Caco-2 (cell line): ENCODE measurements at regions of chr10 and their contacts with region 1.

Region 1: GRCh38 chr10:117496616-117497028 is 45.9 kb upstream of the EMX2 start:
- DNase-seq: peak; percentile 91
- H3K4me3 ChIP-seq: no peak overlapping the region
- H3K4me3 Mint-ChIP-seq: peak overlapping the region; percentile 59
- H3K27ac Mint-ChIP-seq: peak overlapping the region; percentile 69
- H3K4me1 ChIP-seq: peaks cover 17% of the 10 kb centered on the region
- H3K4me1 Mint-ChIP-seq: peaks cover 11% of the 10 kb centered on the region
- H3K27me3 ChIP-seq: no peaks in the 10 kb centered on the region
- H3K27me3 Mint-ChIP-seq: no peaks in the 10 kb centered on the region
- CTCF ChIP-seq: peak; percentile 93 to 94

Region 2: GRCh38 chr10:117431160-117431559 is 65.5 kb before region 1 on chr10:
- CTCF ChIA-PET with region 1: interaction called, 16 read pairs
- POLR2A ChIA-PET with region 1: no interaction called
- intact Hi-C with region 1: no loop called
- DNase-seq: peak in 1 of 2 experiments; percentile 40
- H3K4me3 ChIP-seq: no peak overlapping the region
- H3K4me3 Mint-ChIP-seq: no peak overlapping the region
- H3K27ac Mint-ChIP-seq: no peak overlapping the region
- H3K4me1 ChIP-seq: peaks cover 23% of the 10 kb centered on the region
- H3K4me1 Mint-ChIP-seq: peaks cover 5% of the 10 kb centered on the region
- H3K27me3 ChIP-seq: no peaks in the 10 kb centered on the region
- H3K27me3 Mint-ChIP-seq: no peaks in the 10 kb centered on the region
- CTCF ChIP-seq: peak; percentile 49 to 58

Region 3: DNA sequence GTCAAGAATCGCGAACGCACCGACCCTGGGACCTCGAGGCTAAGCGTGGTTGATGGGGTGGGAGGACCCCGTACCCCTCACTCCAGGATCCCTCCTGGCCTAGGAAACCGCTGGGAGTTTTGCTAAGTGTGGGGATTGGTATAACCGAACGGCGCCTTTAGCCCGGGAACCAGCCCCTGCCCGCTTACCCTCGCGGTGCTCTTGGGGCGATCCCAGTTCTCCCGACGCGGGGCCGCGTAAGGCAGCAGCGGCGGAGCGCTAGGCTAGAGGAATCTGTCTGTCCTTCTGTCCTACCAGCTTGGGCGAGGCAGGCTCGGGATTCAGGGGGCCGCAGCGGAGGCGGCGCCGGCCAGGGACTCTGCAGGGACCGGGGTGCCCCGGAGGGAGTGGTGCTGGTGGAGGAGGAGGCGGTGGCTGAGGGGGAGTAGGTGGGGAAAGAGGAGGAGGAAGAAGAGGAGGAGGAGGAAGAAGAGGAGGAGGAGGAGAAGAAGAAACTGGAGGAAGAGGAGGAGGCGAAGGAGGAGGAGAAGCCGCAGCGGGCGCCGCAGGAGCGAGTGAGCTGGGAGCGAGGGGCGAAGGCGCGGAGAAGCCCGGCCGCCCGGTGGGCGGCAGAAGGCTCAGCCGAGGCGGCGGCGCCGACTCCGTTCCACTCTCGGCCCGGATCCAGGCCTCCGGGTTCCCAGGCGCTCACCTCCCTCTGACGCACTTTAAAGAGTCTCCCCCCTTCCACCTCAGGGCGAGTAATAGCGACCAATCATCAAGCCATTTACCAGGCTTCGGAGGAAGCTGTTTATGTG is 45.5 kb after region 1 on chr10:
- CTCF ChIA-PET with region 1: interaction called, 24 read pairs
- POLR2A ChIA-PET with region 1: no interaction called
- intact Hi-C with region 1: loop called (anchors 1 kb)
- DNase-seq: peak; percentile 88 to 90
- H3K4me3 ChIP-seq: peak overlapping the region; percentile 90
- H3K4me3 Mint-ChIP-seq: peak overlapping the region; percentile 93
- H3K27ac Mint-ChIP-seq: peak overlapping the region; percentile 65
- H3K4me1 ChIP-seq: peaks cover 9% of the 10 kb centered on the region
- H3K4me1 Mint-ChIP-seq: peaks cover 14% of the 10 kb centered on the region
- H3K27me3 ChIP-seq: no peaks in the 10 kb centered on the region
- H3K27me3 Mint-ChIP-seq: no peaks in the 10 kb centered on the region
- CTCF ChIP-seq: no peak

Region 4: DNA sequence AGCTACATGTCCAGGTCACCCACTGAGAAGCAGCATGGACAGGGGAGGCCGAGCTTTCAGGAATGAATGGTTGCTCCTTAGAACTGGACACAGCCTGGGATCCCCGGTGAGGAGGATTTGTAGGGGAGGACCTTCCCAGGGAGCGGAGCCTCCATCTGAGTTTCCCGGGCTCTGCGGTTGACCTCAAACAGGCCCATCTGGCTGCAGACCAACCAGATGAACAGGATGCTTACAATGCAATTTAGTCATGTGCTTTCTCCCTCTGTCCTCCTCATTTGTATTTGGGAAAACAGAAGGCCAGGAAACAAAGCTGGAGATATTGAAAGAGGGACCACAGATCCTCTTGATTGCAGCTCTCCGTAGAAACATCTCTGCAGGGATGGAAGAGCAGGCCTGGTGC is 150.7 kb after region 1 on chr10:
- CTCF ChIA-PET with region 1: no interaction called
- POLR2A ChIA-PET with region 1: no interaction called
- intact Hi-C with region 1: no loop called
- DNase-seq: no peak
- H3K4me3 ChIP-seq: no peak overlapping the region
- H3K4me3 Mint-ChIP-seq: no peak overlapping the region
- H3K27ac Mint-ChIP-seq: no peak overlapping the region
- H3K4me1 ChIP-seq: no peaks in the 10 kb centered on the region
- H3K4me1 Mint-ChIP-seq: no peaks in the 10 kb centered on the region
- H3K27me3 ChIP-seq: no peaks in the 10 kb centered on the region
- H3K27me3 Mint-ChIP-seq: peaks cover 4% of the 10 kb centered on the region
- CTCF ChIP-seq: no peak

Region 5: DNA sequence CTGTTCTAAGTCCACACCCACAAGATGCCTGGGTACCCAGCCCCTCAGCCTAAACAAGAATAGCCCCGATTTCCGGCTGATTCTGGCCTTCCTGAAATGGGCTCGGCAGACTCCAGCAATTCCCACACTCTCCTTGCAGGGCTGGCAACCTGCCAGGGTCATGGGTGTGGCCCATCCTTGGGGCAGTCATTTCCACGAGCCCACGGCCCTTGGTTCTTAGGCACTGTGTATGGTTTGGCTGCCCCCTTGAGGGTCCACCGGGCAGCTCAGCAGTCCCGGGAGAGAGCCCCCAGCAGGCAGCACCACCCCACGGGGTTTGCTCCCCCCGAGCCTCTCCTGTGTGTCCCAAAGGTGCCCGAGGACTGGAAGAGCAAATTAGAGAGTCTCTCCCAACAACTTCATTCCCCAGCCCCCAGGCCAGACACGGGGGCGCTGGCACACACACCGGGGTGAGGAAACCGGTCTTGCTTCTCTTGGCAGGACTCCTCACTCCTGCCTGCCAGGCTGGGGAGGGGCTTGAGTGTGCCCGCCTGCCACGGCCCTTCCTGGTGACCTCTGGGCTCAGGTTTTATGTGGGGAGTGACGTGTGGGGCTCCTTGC is 188.2 kb after region 1 on chr10:
- CTCF ChIA-PET with region 1: interaction called, 3 read pairs
- POLR2A ChIA-PET with region 1: no interaction called
- intact Hi-C with region 1: loop called (anchors 2 kb)
- DNase-seq: peak in 1 of 2 experiments; percentile 16
- H3K4me3 ChIP-seq: no peak overlapping the region
- H3K4me3 Mint-ChIP-seq: no peak overlapping the region
- H3K27ac Mint-ChIP-seq: no peak overlapping the region
- H3K4me1 ChIP-seq: no peaks in the 10 kb centered on the region
- H3K4me1 Mint-ChIP-seq: no peaks in the 10 kb centered on the region
- H3K27me3 ChIP-seq: no peaks in the 10 kb centered on the region
- H3K27me3 Mint-ChIP-seq: no peaks in the 10 kb centered on the region
- CTCF ChIP-seq: peak; percentile 20 to 35

Region 6: GRCh38 chr10:118106426-118106825 is 609.8 kb after region 1 on chr10:
- CTCF ChIA-PET with region 1: interaction called, 7 read pairs
- POLR2A ChIA-PET with region 1: interaction called, 10 read pairs
- intact Hi-C with region 1: loop called (anchors 1 kb)
- DNase-seq: peak; percentile 32 to 60
- H3K4me3 ChIP-seq: no peak overlapping the region
- H3K4me3 Mint-ChIP-seq: no peak overlapping the region
- H3K27ac Mint-ChIP-seq: no peak overlapping the region
- H3K4me1 ChIP-seq: no peaks in the 10 kb centered on the region
- H3K4me1 Mint-ChIP-seq: no peaks in the 10 kb centered on the region
- H3K27me3 ChIP-seq: no peaks in the 10 kb centered on the region
- H3K27me3 Mint-ChIP-seq: no peaks in the 10 kb centered on the region
- CTCF ChIP-seq: peak; percentile 56 to 65

Region 7: DNA sequence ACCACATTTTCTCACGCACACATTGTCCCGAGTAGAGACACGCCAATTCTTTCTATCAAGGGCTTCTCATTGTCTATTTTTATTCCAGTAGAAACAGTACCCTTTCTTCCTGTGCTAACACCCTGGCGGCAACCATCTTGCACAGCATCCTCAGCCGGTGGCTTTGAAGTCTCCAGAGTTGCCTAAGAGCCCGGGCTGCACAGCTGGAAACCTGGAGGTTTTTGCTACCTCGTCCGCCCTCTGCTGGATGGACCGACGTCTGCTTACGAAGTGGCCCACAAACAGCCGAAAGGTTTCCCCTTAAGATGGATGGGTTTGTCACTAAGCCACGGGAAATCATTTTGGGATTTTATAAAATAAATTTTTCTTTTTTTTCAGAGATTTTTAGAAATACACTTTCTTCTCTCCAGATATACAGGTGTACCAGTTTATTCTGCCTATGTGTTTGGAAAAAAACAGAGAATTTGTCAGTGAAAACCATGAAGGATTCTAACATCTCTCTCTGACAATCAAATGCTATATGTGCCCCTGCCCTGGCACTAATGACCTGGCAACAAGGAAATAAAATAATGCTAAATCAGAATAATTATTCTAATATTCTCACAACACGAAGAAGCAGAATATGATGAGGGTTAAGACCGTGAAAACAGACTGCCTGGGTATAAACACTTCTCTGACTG is 927.3 kb after region 1 on chr10:
- CTCF ChIA-PET with region 1: interaction called, 3 read pairs
- POLR2A ChIA-PET with region 1: no interaction called
- intact Hi-C with region 1: loop called (anchors 1 kb)
- DNase-seq: peak; percentile 91 to 93
- H3K4me3 ChIP-seq: no peak overlapping the region
- H3K4me3 Mint-ChIP-seq: no peak overlapping the region
- H3K27ac Mint-ChIP-seq: no peak overlapping the region
- H3K4me1 ChIP-seq: no peaks in the 10 kb centered on the region
- H3K4me1 Mint-ChIP-seq: peaks cover 7% of the 10 kb centered on the region
- H3K27me3 ChIP-seq: no peaks in the 10 kb centered on the region
- H3K27me3 Mint-ChIP-seq: peaks cover 12% of the 10 kb centered on the region
- CTCF ChIP-seq: peak; percentile 88 to 91